ENCODE measurements at regions of chr7 and their contacts with region 1.

Region 1: DNA sequence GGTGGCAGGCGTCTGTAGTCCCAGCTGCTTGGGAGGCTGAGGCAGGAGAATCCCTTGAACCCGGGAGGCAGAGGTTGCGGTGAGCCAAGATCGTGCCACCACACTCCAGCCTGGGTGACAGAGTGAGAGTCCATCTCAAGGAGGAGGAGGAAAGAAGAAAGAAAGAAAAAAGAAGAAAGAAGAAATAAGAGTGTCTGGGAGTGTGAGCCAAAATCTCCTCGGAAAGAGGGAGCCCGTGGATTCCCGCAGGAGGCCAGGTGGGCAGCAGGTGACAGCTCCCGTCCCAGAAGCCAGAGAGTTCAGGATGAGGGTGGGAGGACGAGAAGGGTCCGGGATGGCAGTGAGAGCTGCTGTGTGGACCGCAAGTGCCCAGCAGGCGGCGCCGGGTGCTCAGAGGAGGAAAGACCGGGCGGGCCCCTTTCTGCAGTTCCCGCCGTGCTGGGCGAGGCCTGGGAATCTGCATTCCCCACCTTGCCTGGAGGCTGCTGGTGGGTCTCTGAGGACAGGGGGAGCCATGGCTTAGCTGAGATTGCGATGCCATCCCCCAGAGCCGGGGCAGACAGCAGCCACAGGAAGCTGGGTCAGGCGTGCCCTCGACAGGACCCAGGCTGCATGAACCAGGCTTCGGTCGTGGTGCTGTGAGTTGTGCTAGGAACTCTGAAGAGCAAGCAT is 17.1 kb upstream of the AMZ1 start:
- DNase-seq: peak; percentile 96
- H3K4me3 ChIP-seq: no peak overlapping the region; a peak in 1 of 4 replicates
- H3K27ac ChIP-seq: no peak overlapping the region
- H3K4me1 ChIP-seq: peaks cover 0 to 3% of the 10 kb centered on the region in 2 experiments; a peak in 1 of 4 replicates
- H3K27me3 ChIP-seq: no peaks in the 10 kb centered on the region
- CTCF ChIP-seq: peak; percentile 97
- EP300 ChIP-seq: no peak
- RAD21 ChIP-seq: peak; percentile 93

Region 2: DNA sequence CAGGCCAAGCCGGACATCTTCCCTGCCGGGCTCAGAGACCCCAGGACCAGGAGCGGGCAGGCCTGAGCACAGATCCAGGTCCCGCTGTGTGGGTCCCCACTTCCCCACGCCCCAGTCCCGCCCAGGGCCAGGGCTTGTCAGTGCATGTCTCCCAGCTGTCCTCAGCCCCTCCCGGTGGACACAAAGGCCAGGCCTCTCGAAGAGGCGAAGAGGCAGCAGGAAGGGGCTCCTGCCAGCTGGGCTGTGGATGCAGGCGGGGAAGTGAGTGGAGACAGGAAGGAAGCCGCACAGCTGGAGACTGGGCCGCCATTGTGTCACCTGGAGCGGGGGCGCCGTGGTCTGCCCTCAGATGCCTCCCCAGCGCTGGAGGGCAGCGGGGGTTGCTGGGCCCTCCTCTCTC is 199.5 kb before region 1 on chr7:
- CTCF ChIA-PET with region 1: interaction called, 10 read pairs
- POLR2A ChIA-PET with region 1: no interaction called
- DNase-seq: peak; percentile 64
- H3K4me3 ChIP-seq: no peak overlapping the region
- H3K27ac ChIP-seq: no peak overlapping the region
- H3K4me1 ChIP-seq: peaks cover 0 to 5% of the 10 kb centered on the region in 2 experiments; a peak in 1 of 4 replicates
- H3K27me3 ChIP-seq: no peaks in the 10 kb centered on the region
- CTCF ChIP-seq: no peak
- EP300 ChIP-seq: no peak
- RAD21 ChIP-seq: no peak

Region 3: DNA sequence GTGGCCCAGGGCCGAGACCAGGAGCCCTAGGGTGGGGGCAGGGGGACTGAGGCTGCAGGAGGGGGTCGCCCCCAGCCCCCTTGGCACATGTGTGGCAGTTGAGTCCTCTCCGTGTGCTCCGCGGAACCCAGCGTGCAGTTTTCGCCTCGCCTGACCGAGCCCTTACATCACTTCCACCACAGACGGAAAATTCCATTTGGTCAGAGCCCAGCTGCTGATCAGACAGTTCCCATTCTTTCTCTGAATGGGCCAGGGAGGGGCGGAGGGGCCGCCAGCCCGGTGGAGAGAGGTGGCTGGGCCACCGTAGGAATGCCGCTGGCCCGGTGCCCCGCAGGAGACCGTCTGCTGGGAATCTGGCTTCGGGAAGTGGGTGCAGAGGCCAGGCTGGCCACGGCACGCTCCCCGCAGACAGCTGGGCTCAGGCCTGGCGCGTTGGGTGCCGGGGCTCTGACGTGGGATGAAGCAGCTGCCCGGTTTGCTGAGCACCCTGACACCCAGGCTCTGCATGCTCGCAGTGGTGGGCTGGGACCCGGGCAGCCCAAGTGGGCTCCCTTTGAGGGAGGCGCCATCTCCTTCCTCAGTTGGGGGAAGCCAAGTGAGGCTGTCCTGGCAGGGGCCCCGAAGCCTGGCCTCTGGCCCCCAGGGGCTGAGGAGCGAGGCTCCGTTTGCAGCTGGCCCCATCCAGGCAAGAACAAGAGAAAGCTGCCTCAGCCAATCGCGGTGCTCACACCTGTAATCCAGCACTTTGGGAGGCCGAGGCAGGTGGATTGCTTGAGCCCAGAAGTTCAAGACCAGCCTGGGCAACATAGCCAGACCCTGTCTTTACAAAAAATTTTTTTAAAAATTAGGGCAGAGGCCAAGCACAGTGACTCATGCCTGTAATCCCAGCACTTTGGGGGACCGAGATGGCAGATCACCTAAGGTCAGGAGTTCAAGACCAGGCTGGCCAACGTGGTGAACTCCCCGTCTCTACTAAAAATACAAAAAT is 29.2 kb before region 1 on chr7:
- CTCF ChIA-PET with region 1: interaction called, 21 read pairs
- POLR2A ChIA-PET with region 1: no interaction called
- DNase-seq: peak; percentile 75
- H3K4me3 ChIP-seq: no peak overlapping the region
- H3K27ac ChIP-seq: peak overlapping the region; percentile 71 to 95
- H3K4me1 ChIP-seq: peaks cover 61 to 91% of the 10 kb centered on the region in 2 experiments
- H3K27me3 ChIP-seq: no peaks in the 10 kb centered on the region
- CTCF ChIP-seq: no peak
- EP300 ChIP-seq: peak; percentile 40 to 82; a peak in 2 of 4 replicates
- RAD21 ChIP-seq: no peak

Region 4: GRCh38 chr7:2660585-2661408 is 10.1 kb before region 1 on chr7:
- CTCF ChIA-PET with region 1: interaction called, 38 read pairs
- POLR2A ChIA-PET with region 1: no interaction called
- DNase-seq: peak; percentile 70
- H3K4me3 ChIP-seq: no peak overlapping the region
- H3K27ac ChIP-seq: peak overlapping the region in 1 of 2 experiments; percentile 35; a peak in 1 of 4 replicates
- H3K4me1 ChIP-seq: peaks cover 0 to 39% of the 10 kb centered on the region in 2 experiments; a peak in 1 of 4 replicates
- H3K27me3 ChIP-seq: no peaks in the 10 kb centered on the region
- CTCF ChIP-seq: peak; percentile 61
- EP300 ChIP-seq: no peak
- RAD21 ChIP-seq: peak; percentile 24; the same call in 1 of the 2 replicates

Region 5: DNA sequence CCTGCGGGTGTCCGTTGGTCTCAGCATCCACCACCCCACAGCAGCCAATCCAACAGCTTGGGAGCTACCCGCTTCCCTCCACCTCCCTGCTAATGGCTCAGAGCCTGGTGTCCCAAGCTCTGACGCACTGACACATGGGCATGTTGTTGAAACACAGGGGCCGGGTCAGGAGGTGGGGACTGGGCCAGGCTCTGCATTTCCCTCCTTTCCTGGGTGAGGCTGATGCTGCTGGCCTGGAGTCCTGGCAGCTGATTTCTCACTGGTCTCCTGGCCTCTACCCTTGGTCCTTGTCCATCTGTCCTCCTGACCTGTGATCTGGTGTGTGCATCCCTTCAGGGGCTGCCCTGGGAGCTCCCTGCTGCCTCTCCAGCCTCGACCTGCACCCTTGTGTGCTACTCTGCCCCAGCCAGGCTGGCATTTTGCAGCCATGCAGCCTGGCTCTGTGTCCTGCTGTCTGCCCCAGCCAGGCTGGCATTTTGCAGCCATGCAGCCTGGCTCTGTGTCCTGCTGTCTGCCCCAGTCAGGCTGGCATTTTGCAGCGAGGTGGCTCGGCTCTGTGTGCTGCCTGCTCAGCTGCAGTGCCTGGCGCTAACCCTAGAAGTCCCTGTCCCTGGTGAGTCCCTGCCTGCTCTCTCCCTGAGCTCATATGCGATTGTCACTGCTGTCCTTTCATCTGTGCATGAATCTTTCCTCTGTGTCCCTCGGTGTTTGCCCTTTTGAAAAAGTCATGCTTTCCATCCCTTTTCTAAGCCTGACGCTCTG is 31.2 kb after region 1 on chr7:
- CTCF ChIA-PET with region 1: interaction called, 16 read pairs
- POLR2A ChIA-PET with region 1: no interaction called
- DNase-seq: peak; percentile 66
- H3K4me3 ChIP-seq: no peak overlapping the region
- H3K27ac ChIP-seq: no peak overlapping the region
- H3K4me1 ChIP-seq: peaks cover 0 to 2% of the 10 kb centered on the region in 2 experiments; a peak in 1 of 4 replicates
- H3K27me3 ChIP-seq: peaks cover 6% of the 10 kb centered on the region; the same call in 1 of the 2 replicates
- CTCF ChIP-seq: no peak
- EP300 ChIP-seq: no peak
- RAD21 ChIP-seq: no peak

Region 6: GRCh38 chr7:2719007-2719406 is 48.2 kb after region 1 on chr7:
- CTCF ChIA-PET with region 1: interaction called, 49 read pairs
- POLR2A ChIA-PET with region 1: no interaction called
- DNase-seq: peak; percentile 89
- H3K4me3 ChIP-seq: no peak overlapping the region
- H3K27ac ChIP-seq: no peak overlapping the region
- H3K4me1 ChIP-seq: peaks cover 0 to 27% of the 10 kb centered on the region in 2 experiments; a peak in 1 of 4 replicates
- H3K27me3 ChIP-seq: no peaks in the 10 kb centered on the region
- CTCF ChIP-seq: peak; percentile 66
- EP300 ChIP-seq: no peak
- RAD21 ChIP-seq: peak; percentile 46